T-cell (primary cell): ENCODE measurements at regions of chr12 and their contacts with region 1.

Region 1: GRCh38 chr12:95641299-95641952 is 90.2 kb upstream of the USP44 start:
- DNase-seq: no peak
- ATAC-seq: no peak
- H3K4me3 ChIP-seq: no peak overlapping the region
- H3K4me3 Mint-ChIP-seq: no peak overlapping the region
- H3K27ac ChIP-seq: no peak overlapping the region
- H3K27ac Mint-ChIP-seq: no peak overlapping the region
- H3K4me1 ChIP-seq: no peaks in the 10 kb centered on the region
- H3K4me1 Mint-ChIP-seq: peaks cover 0 to 7% (median 4%) of the 10 kb centered on the region in 3 donors
- H3K27me3 ChIP-seq: peaks cover 0 to 4% of the 10 kb centered on the region in 2 experiments
- H3K27me3 Mint-ChIP-seq: peaks cover 2 to 4% of the 10 kb centered on the region in 2 donors

Region 2: DNA sequence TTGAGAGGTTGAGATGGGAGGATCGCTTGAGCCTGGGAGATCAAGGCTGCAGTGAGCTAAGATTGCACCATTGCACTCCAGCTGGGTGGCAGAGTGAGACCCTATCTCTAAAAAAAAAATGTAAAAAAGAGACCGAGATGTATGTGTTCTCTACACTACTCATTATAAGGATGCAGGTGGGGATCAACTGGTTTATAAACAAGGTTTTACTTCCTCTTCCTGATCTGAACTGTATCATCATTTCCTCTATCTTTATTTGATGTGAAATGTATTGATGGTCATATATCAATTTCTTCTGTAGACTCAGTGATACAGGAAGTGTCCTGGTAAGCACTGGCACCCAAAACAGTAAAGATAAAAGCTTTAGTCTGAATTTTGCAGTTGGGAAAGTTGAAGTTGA is 70.1 kb before region 1 on chr12:
- CTCF ChIA-PET with region 1: no interaction called
- POLR2A ChIA-PET with region 1: no interaction called
- DNase-seq: no peak
- ATAC-seq: peak in 1 of 4 experiments; percentile 35
- H3K4me3 ChIP-seq: no peak overlapping the region
- H3K4me3 Mint-ChIP-seq: peak overlapping the region in 1 of 3 donors; percentile 28
- H3K27ac ChIP-seq: no peak overlapping the region
- H3K27ac Mint-ChIP-seq: peak overlapping the region; percentile 55 to 61
- H3K4me1 ChIP-seq: peaks cover 0 to 7% of the 10 kb centered on the region in 2 experiments
- H3K4me1 Mint-ChIP-seq: peaks cover 12 to 34% (median 20%) of the 10 kb centered on the region in 3 donors
- H3K27me3 ChIP-seq: peaks cover 0 to 12% of the 10 kb centered on the region in 2 experiments
- H3K27me3 Mint-ChIP-seq: peaks cover 0 to 3% of the 10 kb centered on the region in 2 donors

Region 3: DNA sequence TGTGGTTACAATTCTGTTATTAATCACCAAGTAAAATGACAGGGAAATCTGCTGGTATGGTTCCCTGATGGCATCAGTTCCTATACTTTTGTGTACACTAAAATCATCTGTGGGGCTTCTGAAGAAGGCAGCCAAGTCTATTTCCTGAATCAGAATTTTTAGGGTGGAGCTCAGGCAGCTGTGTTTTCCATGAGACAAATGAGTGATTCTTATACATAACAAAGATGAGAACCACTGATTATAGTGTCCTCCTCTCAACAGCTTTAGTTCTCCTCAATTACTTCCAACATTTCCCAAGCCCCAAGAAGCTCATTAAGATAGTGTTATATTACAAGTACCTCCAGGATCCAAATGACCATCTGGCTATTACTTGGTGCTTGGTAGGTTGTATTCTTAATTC is 25.7 kb before region 1 on chr12:
- CTCF ChIA-PET with region 1: no interaction called
- POLR2A ChIA-PET with region 1: no interaction called
- DNase-seq: no peak
- ATAC-seq: no peak
- H3K4me3 ChIP-seq: no peak overlapping the region
- H3K4me3 Mint-ChIP-seq: no peak overlapping the region
- H3K27ac ChIP-seq: no peak overlapping the region
- H3K27ac Mint-ChIP-seq: no peak overlapping the region
- H3K4me1 ChIP-seq: no peaks in the 10 kb centered on the region
- H3K4me1 Mint-ChIP-seq: peaks cover 0 to 2% (median 0%) of the 10 kb centered on the region in 3 donors
- H3K27me3 ChIP-seq: peaks cover 0 to 3% of the 10 kb centered on the region in 2 experiments
- H3K27me3 Mint-ChIP-seq: peaks cover 0 to 6% of the 10 kb centered on the region in 2 donors

Region 4: GRCh38 chr12:95859344-95859816 is 218.0 kb after region 1 on chr12:
- CTCF ChIA-PET with region 1: no interaction called
- POLR2A ChIA-PET with region 1: interaction called in 1 of 2 experiments, 14 read pairs
- DNase-seq: peak in 3 of 35 experiments; percentile 7 to 27 (median 20)
- ATAC-seq: peak in 3 of 4 experiments; percentile 4 to 10 (median 6)
- H3K4me3 ChIP-seq: peak overlapping the region; percentile 88 to 95
- H3K4me3 Mint-ChIP-seq: no peak overlapping the region
- H3K27ac ChIP-seq: peak overlapping the region; percentile 84
- H3K27ac Mint-ChIP-seq: no peak overlapping the region
- H3K4me1 ChIP-seq: peaks cover 13 to 26% of the 10 kb centered on the region in 2 experiments
- H3K4me1 Mint-ChIP-seq: peaks cover 5 to 31% (median 31%) of the 10 kb centered on the region in 3 donors
- H3K27me3 ChIP-seq: peaks cover 0 to 3% of the 10 kb centered on the region in 2 experiments
- H3K27me3 Mint-ChIP-seq: peaks cover 0 to 3% of the 10 kb centered on the region in 2 donors

Region 5: GRCh38 chr12:95993907-95994306 is 352.5 kb after region 1 on chr12:
- CTCF ChIA-PET with region 1: no interaction called
- POLR2A ChIA-PET with region 1: no interaction called
- DNase-seq: no peak
- ATAC-seq: no peak
- H3K4me3 ChIP-seq: no peak overlapping the region
- H3K4me3 Mint-ChIP-seq: no peak overlapping the region
- H3K27ac ChIP-seq: no peak overlapping the region
- H3K27ac Mint-ChIP-seq: no peak overlapping the region
- H3K4me1 ChIP-seq: no peaks in the 10 kb centered on the region
- H3K4me1 Mint-ChIP-seq: peaks cover 2 to 4% (median 2%) of the 10 kb centered on the region in 3 donors
- H3K27me3 ChIP-seq: no peaks in the 10 kb centered on the region
- H3K27me3 Mint-ChIP-seq: no peaks in the 10 kb centered on the region